CD8-positive, alpha-beta T cell (primary cell): ENCODE measurements at regions of chrX and their contacts with region 1.

Region 1: GRCh38 chrX:152926279-152926678 is 28.4 kb downstream of the ZNF185 start:
- DNase-seq: peak; percentile 5 to 64 (median 41)
- ATAC-seq: peak; percentile 84
- H3K4me3 ChIP-seq: no peak overlapping the region
- H3K4me3 Mint-ChIP-seq: no peak overlapping the region
- H3K27ac ChIP-seq: no peak overlapping the region
- H3K27ac Mint-ChIP-seq: no peak overlapping the region
- H3K4me1 ChIP-seq: peaks cover 16% of the 10 kb centered on the region
- H3K4me1 Mint-ChIP-seq: peaks cover 16% of the 10 kb centered on the region
- H3K27me3 ChIP-seq: no peaks in the 10 kb centered on the region
- H3K27me3 Mint-ChIP-seq: no peaks in the 10 kb centered on the region
- CTCF ChIP-seq: peak; percentile 20

Region 2: GRCh38 chrX:151753313-151754041 is 1172.8 kb before region 1 on chrX:
- CTCF ChIA-PET with region 1: no interaction called
- POLR2A ChIA-PET with region 1: no interaction called
- intact Hi-C with region 1: loop called in 1 of 2 experiments (anchors 10 kb)
- DNase-seq: no peak
- ATAC-seq: no peak
- H3K4me3 ChIP-seq: no peak overlapping the region
- H3K4me3 Mint-ChIP-seq: no peak overlapping the region
- H3K27ac ChIP-seq: no peak overlapping the region
- H3K27ac Mint-ChIP-seq: no peak overlapping the region
- H3K4me1 ChIP-seq: no peaks in the 10 kb centered on the region
- H3K4me1 Mint-ChIP-seq: no peaks in the 10 kb centered on the region
- H3K27me3 ChIP-seq: no peaks in the 10 kb centered on the region
- H3K27me3 Mint-ChIP-seq: peaks cover 2% of the 10 kb centered on the region
- CTCF ChIP-seq: no peak

Region 3: DNA sequence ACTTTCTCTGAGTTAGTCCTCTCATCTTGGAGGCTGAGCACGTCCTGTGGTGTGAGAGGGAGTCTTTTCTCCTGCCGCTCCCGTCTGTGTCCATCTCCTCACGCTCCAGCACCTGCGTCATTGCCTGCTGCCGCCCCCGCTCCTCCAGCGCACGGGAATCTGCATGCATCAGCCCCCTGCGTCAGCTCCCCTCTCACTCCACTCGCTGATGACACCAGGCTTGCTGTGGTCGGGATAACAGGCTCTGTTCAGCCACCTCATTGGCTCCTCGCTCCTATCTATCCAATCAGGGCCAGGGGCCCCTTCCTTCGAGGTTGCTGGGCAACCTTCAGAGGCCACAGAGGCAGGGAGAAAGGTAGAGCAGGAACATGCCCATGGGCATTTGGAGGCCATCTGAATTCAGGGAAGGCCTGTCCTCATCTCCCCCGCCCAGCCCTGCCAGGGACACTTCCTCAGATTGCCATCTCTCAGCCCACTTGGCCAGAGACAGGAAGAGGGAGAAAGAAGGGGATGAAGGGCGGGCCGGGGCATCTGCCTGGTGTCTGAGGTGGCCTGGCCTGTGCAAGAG is 19.1 kb before region 1 on chrX:
- CTCF ChIA-PET with region 1: interaction called, 11 read pairs
- POLR2A ChIA-PET with region 1: no interaction called
- intact Hi-C with region 1: no loop called
- DNase-seq: no peak
- ATAC-seq: no peak
- H3K4me3 ChIP-seq: no peak overlapping the region
- H3K4me3 Mint-ChIP-seq: no peak overlapping the region
- H3K27ac ChIP-seq: no peak overlapping the region
- H3K27ac Mint-ChIP-seq: no peak overlapping the region
- H3K4me1 ChIP-seq: no peaks in the 10 kb centered on the region
- H3K4me1 Mint-ChIP-seq: no peaks in the 10 kb centered on the region
- H3K27me3 ChIP-seq: no peaks in the 10 kb centered on the region
- H3K27me3 Mint-ChIP-seq: peaks cover 3% of the 10 kb centered on the region
- CTCF ChIP-seq: no peak

Region 4: GRCh38 chrX:153065389-153065788 is 139.1 kb after region 1 on chrX:
- CTCF ChIA-PET with region 1: no interaction called
- POLR2A ChIA-PET with region 1: no interaction called
- intact Hi-C with region 1: no loop called
- DNase-seq: no peak
- ATAC-seq: no peak
- H3K4me3 ChIP-seq: no peak overlapping the region
- H3K4me3 Mint-ChIP-seq: no peak overlapping the region
- H3K27ac ChIP-seq: no peak overlapping the region
- H3K27ac Mint-ChIP-seq: no peak overlapping the region
- H3K4me1 ChIP-seq: no peaks in the 10 kb centered on the region
- H3K4me1 Mint-ChIP-seq: no peaks in the 10 kb centered on the region
- H3K27me3 ChIP-seq: no peaks in the 10 kb centered on the region
- H3K27me3 Mint-ChIP-seq: no peaks in the 10 kb centered on the region
- CTCF ChIP-seq: no peak